Right lobe of liver (tissue), 6 donors: ENCODE measurements at regions of chr20 and their contacts with region 1.

Region 1: DNA sequence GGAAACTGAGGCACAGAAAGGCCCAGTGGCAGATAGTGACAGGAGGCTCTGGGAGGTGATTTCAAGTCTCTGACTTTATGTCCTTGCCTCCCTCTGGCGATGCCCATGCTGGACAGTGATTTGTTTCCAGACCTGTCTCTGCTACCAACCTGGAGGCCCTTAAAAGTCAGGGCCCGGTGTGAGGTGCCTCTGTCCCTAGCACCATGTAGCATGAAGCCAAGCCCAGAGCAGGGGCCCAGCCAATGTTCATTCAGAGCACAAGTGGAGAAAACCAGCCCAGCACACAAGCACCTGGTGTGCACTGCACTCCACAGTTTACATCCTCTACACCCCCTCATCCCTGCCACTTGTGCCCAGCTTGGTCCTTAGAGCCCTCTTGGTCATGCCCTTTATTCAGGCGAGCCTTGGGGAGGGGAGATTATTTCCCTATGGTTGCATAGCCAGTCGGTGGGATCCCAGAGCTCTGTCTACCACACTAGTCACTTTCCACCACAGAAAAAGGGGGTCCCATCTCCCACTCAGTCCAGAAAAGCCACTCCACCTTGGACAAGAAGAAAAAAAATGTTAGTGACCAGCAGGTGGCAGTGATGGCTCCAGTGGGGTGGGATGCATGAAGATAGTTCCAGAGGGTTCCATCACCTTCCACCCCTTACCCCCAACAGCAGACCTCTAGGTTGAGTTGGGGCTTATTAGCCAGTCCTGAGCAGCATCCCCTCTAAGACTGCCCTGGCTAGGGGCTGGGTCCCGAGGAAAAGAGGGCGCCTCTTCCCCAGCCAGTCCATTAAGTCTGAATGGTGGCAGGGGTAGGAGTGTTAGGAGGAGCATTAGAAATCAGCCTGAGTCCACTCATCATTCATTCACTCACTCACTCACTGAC is 30.9 kb downstream of the KIAA1755 start:
- DNase-seq: no peak
- ATAC-seq: peak; percentile 40 to 63 (median 61)
- H3K4me3 ChIP-seq: no peak overlapping the region
- H3K27ac ChIP-seq: no peak overlapping the region
- H3K4me1 ChIP-seq: no peaks in the 10 kb centered on the region
- H3K27me3 ChIP-seq: no peaks in the 10 kb centered on the region
- CTCF ChIP-seq: peak; percentile 54 to 63 (median 59)
- POLR2A ChIP-seq: no peak

Region 2: GRCh38 chr20:38304845-38305447 is 75.3 kb after region 1 on chr20:
- intact Hi-C with region 1: loop called (anchors 5 to 10 kb)
- DNase-seq: peak; percentile 65 to 81 (median 79)
- ATAC-seq: peak; percentile 83 to 94 (median 86)
- H3K4me3 ChIP-seq: no peak overlapping the region
- H3K27ac ChIP-seq: no peak overlapping the region
- H3K4me1 ChIP-seq: no peaks in the 10 kb centered on the region
- H3K27me3 ChIP-seq: no peaks in the 10 kb centered on the region
- CTCF ChIP-seq: peak; percentile 59 to 67 (median 64)
- POLR2A ChIP-seq: no peak